ENCODE measurements at regions of chr3 and their contacts with region 1.

Region 1: GRCh38 chr3:149120051-149120972 is 9.1 kb upstream of the HPS3 start:
- DNase-seq: peak; percentile 80
- H3K4me3 ChIP-seq: no peak overlapping the region
- H3K27ac ChIP-seq: no peak overlapping the region
- H3K4me1 ChIP-seq: no peaks in the 10 kb centered on the region
- H3K27me3 ChIP-seq: no peaks in the 10 kb centered on the region
- CTCF ChIP-seq: peak; percentile 21 to 39
- POLR2A ChIP-seq: no peak

Region 2: DNA sequence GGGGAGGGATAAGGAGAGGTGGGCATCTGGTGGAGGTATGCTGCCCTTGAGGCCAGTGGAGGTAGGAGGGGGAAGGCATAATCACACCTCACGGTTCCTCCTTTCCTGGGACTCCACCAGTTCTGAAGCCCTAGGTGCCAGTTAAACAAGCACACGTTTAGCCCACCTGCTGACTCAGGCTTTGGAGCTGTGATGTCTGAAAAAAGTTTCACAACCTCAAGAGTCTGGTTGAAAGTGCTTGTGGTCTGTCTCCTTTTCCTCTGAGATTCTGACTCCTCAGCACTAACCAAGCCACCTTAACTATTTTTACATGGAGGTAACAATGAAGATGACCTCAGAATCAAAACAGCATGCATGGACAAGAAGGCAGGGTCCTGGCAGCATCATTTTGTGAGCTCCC is 32.1 kb after region 1 on chr3:
- CTCF ChIA-PET with region 1: interaction called, 10 read pairs
- POLR2A ChIA-PET with region 1: no interaction called
- dilution Hi-C with region 1: no loop called
- intact Hi-C with region 1: no loop called
- DNase-seq: no peak
- H3K4me3 ChIP-seq: no peak overlapping the region
- H3K27ac ChIP-seq: no peak overlapping the region
- H3K4me1 ChIP-seq: peaks cover 11% of the 10 kb centered on the region
- H3K27me3 ChIP-seq: no peaks in the 10 kb centered on the region
- CTCF ChIP-seq: no peak
- POLR2A ChIP-seq: no peak

Region 3: GRCh38 chr3:149267565-149267964 is 147.3 kb after region 1 on chr3:
- CTCF ChIA-PET with region 1: interaction called, 105 read pairs
- POLR2A ChIA-PET with region 1: no interaction called
- dilution Hi-C with region 1: no loop called
- intact Hi-C with region 1: no loop called
- DNase-seq: no peak
- H3K4me3 ChIP-seq: no peak overlapping the region
- H3K27ac ChIP-seq: no peak overlapping the region
- H3K4me1 ChIP-seq: no peaks in the 10 kb centered on the region
- H3K27me3 ChIP-seq: no peaks in the 10 kb centered on the region
- CTCF ChIP-seq: no peak
- POLR2A ChIP-seq: no peak

Region 4: GRCh38 chr3:149330609-149331331 is 210.5 kb after region 1 on chr3:
- CTCF ChIA-PET with region 1: interaction called, 61 read pairs
- POLR2A ChIA-PET with region 1: no interaction called
- dilution Hi-C with region 1: no loop called
- intact Hi-C with region 1: loop called (anchors 1 kb)
- DNase-seq: no peak
- H3K4me3 ChIP-seq: peak overlapping the region in 1 of 3 experiments; percentile 92
- H3K27ac ChIP-seq: peak overlapping the region; percentile 92
- H3K4me1 ChIP-seq: peaks cover 54% of the 10 kb centered on the region
- H3K27me3 ChIP-seq: no peaks in the 10 kb centered on the region
- CTCF ChIP-seq: no peak
- POLR2A ChIP-seq: no peak

Region 5: GRCh38 chr3:149480325-149481017 is 360.2 kb after region 1 on chr3:
- CTCF ChIA-PET with region 1: interaction called, 25 read pairs
- POLR2A ChIA-PET with region 1: no interaction called
- dilution Hi-C with region 1: no loop called
- intact Hi-C with region 1: loop called (anchors 1 kb)
- DNase-seq: peak; percentile 93
- H3K4me3 ChIP-seq: no peak overlapping the region
- H3K27ac ChIP-seq: peak overlapping the region; percentile 64
- H3K4me1 ChIP-seq: peaks cover 12% of the 10 kb centered on the region
- H3K27me3 ChIP-seq: no peaks in the 10 kb centered on the region
- CTCF ChIP-seq: peak; percentile 91 to 93
- POLR2A ChIP-seq: no peak